ENCODE measurements at regions of chr16 and their contacts with region 1.

Region 1: DNA sequence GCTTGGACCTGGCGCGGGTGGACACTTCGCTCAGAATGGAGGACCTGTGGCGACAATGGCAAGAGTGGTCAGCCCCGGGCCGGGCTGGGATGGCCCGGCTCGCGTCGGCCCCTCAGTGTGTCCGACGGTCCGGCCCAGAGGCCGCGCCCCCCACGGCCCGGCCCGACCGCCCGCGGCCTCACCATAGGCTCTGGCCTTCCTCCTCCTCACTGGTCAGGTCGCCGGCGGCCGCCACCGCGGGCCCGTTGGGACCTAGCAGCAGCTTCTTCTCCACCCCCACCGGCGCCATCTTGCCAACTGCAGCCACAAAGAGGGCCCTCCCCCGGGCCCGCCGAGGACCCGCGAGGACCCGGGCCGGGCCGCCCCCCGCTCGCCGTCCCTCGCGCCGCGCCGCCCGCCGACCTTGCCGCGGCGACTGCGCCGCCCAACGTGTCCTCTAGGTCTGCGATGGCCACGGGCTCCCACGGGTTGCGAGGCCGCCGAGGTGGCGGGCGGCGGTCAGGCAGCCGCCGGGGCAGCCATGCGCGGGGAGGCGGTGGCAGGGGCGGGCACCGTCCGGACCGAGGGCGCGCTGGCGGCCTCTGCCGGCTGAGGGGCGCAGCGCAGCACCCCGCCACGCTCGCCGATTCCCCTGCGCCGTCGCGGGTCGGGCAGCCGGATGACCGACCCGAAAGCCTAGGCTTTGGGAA is at the start of gene DYNC1LI2:
- DNase-seq: peak; percentile 85
- H3K27ac ChIP-seq: peak within 1 kb of the TSS; percentile 81
- CTCF ChIP-seq: peak; percentile 97

Region 2: GRCh38 chr16:66406534-66407221 is 344.8 kb before region 1 on chr16:
- CTCF ChIA-PET with region 1: no interaction called
- POLR2A ChIA-PET with region 1: no interaction called
- DNase-seq: peak; percentile 90
- H3K27ac ChIP-seq: peak overlapping the region; percentile 77
- CTCF ChIP-seq: peak; percentile 78

Region 3: GRCh38 chr16:66656547-66656946 is 94.9 kb before region 1 on chr16:
- CTCF ChIA-PET with region 1: no interaction called
- POLR2A ChIA-PET with region 1: no interaction called
- DNase-seq: no peak
- H3K27ac ChIP-seq: no peak overlapping the region
- CTCF ChIP-seq: no peak

Region 4: DNA sequence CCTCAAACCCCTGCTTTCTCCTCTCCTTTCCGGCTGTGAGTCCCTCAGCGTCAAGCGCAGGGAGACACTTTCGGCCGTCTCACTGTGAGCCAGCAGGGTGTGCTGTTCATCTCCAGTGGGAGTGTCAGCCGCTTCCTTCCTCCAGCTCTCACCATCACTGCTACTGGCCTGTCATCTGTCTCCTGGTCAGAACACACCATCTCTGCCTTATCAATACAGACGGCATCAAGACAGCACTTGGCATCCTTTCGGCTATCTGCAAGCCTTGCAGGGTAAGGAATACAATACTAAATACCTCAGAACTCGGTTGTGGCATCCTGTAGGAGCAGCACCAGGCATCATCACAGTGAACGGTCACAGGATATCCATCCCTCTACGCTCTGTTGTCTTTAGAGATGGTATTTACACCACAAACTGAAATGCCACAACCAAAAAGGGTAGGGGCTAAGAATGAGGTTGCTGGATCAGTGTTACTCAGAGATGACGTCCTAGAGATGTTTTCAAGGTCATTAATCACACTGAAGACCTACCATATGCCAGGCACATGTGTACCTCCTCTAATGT is 34.3 kb before region 1 on chr16:
- CTCF ChIA-PET with region 1: no interaction called
- POLR2A ChIA-PET with region 1: interaction called, 12 read pairs
- DNase-seq: no peak
- H3K27ac ChIP-seq: no peak overlapping the region
- CTCF ChIP-seq: no peak

Region 5: DNA sequence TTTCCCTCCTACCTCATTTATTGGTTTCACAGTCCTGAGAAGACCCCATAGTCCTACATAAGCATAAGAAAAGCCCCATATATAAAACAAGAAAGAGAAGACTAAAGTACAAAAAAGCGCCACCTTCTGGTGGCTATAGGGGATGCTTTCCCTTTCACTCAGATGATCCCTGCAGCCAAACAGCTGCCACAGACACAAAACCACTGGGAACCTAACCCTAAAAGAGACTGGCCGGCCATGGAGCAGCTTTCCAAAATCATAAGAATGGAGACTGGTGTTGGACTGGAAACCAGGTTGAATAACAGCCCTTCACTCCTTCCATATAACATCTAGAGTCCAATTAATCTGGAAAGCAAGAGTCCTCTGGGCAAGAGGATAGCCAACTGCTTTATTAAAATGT is 11.4 kb before region 1 on chr16:
- CTCF ChIA-PET with region 1: interaction called, 13 read pairs
- POLR2A ChIA-PET with region 1: interaction called, 10 read pairs
- DNase-seq: peak; percentile 49
- H3K27ac ChIP-seq: no peak overlapping the region
- CTCF ChIP-seq: peak; percentile 38

Measured in RWPE1 (cell line).